ENCODE measurements at regions of chr10 and their contacts with region 1.

Region 1: GRCh38 chr10:93180482-93180931 is 106.8 kb downstream of the CYP26A1 start:
- DNase-seq: no peak
- H3K4me3 ChIP-seq: no peak overlapping the region
- H3K4me3 Mint-ChIP-seq: no peak overlapping the region
- H3K27ac Mint-ChIP-seq: no peak overlapping the region
- H3K4me1 ChIP-seq: peaks cover 9% of the 10 kb centered on the region; the same call in 1 of the 2 replicates
- H3K4me1 Mint-ChIP-seq: no peaks in the 10 kb centered on the region
- H3K27me3 ChIP-seq: no peaks in the 10 kb centered on the region
- H3K27me3 Mint-ChIP-seq: no peaks in the 10 kb centered on the region
- CTCF ChIP-seq: no peak

Region 2: DNA sequence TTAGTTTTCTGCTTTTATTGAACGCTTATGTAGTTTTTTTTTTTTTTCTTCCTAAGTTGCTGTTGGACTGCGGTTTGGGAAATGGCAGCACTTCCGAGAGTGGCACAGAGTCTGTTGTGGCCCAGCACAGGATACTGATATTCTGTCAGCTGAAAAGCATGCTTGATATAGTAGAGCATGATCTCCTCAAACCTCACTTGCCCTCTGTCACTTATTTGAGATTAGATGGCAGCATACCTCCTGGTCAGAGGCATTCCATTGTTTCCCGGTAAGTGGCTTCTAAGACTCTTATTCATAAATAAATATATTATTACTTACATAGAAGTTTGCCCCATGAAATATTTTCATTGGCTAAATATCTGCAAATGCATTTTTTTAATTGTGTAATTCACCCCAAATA is 1155.8 kb before region 1 on chr10:
- CTCF ChIA-PET with region 1: no interaction called
- POLR2A ChIA-PET with region 1: no interaction called
- intact Hi-C with region 1: loop called (anchors 10 kb)
- DNase-seq: no peak
- H3K4me3 ChIP-seq: no peak overlapping the region
- H3K4me3 Mint-ChIP-seq: no peak overlapping the region
- H3K27ac Mint-ChIP-seq: peak overlapping the region; percentile 63
- H3K4me1 ChIP-seq: peaks cover 38% of the 10 kb centered on the region
- H3K4me1 Mint-ChIP-seq: peaks cover 19% of the 10 kb centered on the region
- H3K27me3 ChIP-seq: no peaks in the 10 kb centered on the region
- H3K27me3 Mint-ChIP-seq: no peaks in the 10 kb centered on the region
- CTCF ChIP-seq: no peak

Region 3: DNA sequence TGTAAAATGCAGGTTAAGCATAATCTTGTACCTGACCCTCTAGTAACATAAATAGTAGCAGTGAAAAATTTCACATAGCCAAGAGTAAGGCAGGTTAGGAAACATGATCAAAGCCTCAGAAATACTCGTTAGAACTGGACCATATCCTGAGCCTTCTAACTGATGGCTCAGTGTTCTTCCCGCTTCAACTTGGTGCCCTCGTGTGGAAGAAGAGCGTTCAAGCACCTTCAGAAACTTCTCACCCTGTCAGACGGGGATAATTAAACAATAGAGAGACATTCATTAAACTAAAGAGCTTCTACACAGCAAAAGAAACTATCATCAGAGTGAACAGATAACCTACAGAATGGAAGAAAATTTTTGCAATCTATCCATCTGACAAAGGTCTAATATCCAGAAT is 177.2 kb after region 1 on chr10:
- CTCF ChIA-PET with region 1: no interaction called
- POLR2A ChIA-PET with region 1: no interaction called
- intact Hi-C with region 1: no loop called
- DNase-seq: peak in 1 of 2 experiments; percentile 13
- H3K4me3 ChIP-seq: no peak overlapping the region
- H3K4me3 Mint-ChIP-seq: no peak overlapping the region
- H3K27ac Mint-ChIP-seq: no peak overlapping the region
- H3K4me1 ChIP-seq: peaks cover under 1% of the 10 kb centered on the region; the same call in 1 of the 2 replicates
- H3K4me1 Mint-ChIP-seq: peaks cover 4% of the 10 kb centered on the region
- H3K27me3 ChIP-seq: no peaks in the 10 kb centered on the region
- H3K27me3 Mint-ChIP-seq: no peaks in the 10 kb centered on the region
- CTCF ChIP-seq: peak; percentile 19 to 61

Measured in Caco-2 (cell line).